ENCODE measurements at regions of chr17 and their contacts with region 1.

Region 1: DNA sequence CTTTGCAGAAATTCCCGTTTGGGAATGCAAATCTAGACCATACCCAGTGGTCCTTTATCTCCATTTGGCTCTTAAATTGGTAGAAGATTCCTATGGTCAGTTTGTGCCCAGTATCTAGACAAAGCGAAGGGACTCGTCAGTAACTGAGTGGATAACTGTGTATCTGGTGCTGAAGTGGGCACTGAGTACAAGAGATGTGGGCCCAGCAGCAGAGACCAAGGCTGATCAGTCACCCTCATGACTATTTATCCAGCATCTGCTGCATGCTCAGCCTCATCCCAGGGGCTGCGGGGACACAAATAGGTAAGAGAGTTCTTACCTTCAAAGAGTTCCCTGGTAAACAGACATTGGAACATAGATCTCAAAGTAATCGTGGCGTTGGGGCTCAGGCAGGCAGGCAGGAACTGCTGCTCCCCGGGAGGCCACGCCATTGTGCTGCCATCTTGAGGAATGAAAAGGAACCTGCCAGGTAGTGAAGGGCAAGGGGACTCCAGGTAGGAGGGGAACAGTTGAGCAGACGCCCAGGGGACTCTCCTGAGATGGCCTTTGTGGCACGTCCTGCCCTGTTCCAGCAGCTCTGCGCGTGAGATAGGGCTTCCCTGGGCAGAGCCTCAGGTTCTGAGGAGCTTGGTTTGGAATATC is 10.3 kb downstream of the NT5M start:
- DNase-seq: peak; percentile 85
- ATAC-seq: peak; percentile 100
- H3K4me3 Mint-ChIP-seq: no peak overlapping the region
- H3K27ac Mint-ChIP-seq: no peak overlapping the region
- H3K4me1 Mint-ChIP-seq: peaks cover 6% of the 10 kb centered on the region
- H3K27me3 Mint-ChIP-seq: no peaks in the 10 kb centered on the region

Region 2: GRCh38 chr17:17001874-17002520 is 311.5 kb before region 1 on chr17:
- CTCF ChIA-PET with region 1: interaction called, 8 read pairs
- POLR2A ChIA-PET with region 1: no interaction called
- intact Hi-C with region 1: loop called (anchors 1 to 2 kb)
- DNase-seq: peak; percentile 88
- ATAC-seq: peak; percentile 98
- H3K4me3 Mint-ChIP-seq: no peak overlapping the region
- H3K27ac Mint-ChIP-seq: no peak overlapping the region
- H3K4me1 Mint-ChIP-seq: no peaks in the 10 kb centered on the region
- H3K27me3 Mint-ChIP-seq: no peaks in the 10 kb centered on the region

Region 3: DNA sequence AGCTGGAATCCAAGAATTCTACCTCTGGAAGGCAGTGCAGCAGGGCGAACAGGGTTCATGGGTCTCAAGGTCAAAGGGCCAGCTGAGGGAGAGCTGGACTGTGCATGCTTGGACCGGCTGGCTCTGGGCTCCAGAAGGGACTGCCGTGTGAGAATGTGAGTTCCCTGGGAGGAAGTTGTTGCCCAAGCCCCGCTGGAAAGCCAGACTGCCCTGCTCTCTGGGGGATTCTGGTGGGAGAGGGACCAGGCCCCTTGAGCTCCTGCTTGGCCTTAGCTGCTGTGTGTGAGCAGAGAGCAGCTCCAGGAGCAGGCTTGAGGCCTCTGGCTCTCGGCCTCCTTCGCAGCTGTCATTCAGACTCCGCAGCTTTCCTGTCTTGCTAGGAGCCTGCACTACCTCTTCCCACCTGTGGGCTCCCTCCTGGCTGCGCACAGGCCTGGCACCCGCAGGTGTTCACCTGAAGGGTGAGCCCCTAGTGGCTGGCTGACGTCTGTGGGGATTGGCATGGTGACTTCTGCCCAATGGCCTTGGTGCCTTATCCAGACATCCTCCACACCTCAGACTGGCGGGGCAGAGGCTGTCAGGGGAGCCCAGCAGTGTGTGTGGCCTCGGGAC is 74.5 kb after region 1 on chr17:
- CTCF ChIA-PET with region 1: no interaction called
- POLR2A ChIA-PET with region 1: no interaction called
- intact Hi-C with region 1: no loop called
- DNase-seq: peak; percentile 49
- ATAC-seq: no peak
- H3K4me3 Mint-ChIP-seq: no peak overlapping the region
- H3K27ac Mint-ChIP-seq: no peak overlapping the region
- H3K4me1 Mint-ChIP-seq: peaks cover 13% of the 10 kb centered on the region
- H3K27me3 Mint-ChIP-seq: no peaks in the 10 kb centered on the region

Region 4: GRCh38 chr17:17783116-17783824 is 469.8 kb after region 1 on chr17:
- CTCF ChIA-PET with region 1: no interaction called
- POLR2A ChIA-PET with region 1: no interaction called
- intact Hi-C with region 1: no loop called
- DNase-seq: peak; percentile 78
- ATAC-seq: peak; percentile 58
- H3K4me3 Mint-ChIP-seq: peak overlapping the region; percentile 55
- H3K27ac Mint-ChIP-seq: no peak overlapping the region
- H3K4me1 Mint-ChIP-seq: peaks cover 18% of the 10 kb centered on the region
- H3K27me3 Mint-ChIP-seq: no peaks in the 10 kb centered on the region

Measured in activated CD4-positive, alpha-beta T cell treated with anti-CD3 and anti-CD28 coated beads for 36 hours (primary cell).